ENCODE measurements at regions of chr1 and their contacts with region 1.

Region 1: DNA sequence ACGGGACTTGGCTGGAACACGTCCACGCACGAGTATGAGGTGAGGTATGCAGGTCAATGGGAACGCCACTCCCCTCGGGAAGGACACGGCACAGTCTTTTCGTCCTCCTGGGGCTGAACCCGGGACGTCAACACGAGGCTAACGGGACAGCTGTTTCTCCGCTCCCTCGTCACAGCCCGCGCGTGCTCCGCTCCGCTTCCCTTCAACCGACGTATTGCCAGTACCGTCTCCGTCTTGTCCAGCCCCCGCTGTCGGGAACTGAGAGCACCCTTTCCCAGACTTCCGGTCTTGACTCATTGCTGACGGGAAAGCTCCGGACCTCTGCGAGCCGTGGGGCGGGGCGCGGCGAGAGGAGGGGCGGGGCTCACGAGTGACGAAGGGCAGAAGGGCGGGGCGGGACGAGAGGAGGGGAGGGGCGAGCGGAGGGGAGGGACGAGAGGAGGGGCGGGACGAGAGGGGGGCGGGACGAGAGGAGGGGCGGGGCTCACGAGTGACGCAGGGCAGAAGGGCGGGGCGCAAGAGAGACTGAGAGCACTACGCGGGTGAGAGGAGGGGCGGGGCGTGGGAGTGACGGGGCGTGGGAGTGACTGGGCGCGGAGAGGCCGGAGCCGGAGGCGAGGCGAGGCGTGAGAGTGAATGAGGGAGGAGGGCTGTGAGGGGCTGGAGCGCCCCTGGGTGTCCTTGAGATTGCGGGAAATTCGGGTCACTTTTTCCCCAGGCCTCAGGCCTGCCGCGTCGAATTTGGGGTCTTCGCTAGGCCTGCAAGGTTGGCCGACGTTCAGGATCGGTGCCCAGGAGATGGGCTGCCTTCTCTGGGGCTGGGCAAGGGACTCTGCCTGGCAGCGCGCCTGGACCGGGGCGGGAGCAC is 22.2 kb upstream of the CFAP126 start:
- DNase-seq: peak; percentile 96 to 98
- ATAC-seq: peak; percentile 95 to 97
- H3K4me3 ChIP-seq: peak overlapping the region; percentile 61 to 82 (median 76)
- H3K27ac ChIP-seq: peak overlapping the region; percentile 86 to 95 (median 92)
- H3K4me1 ChIP-seq: peaks cover 9 to 11% of the 10 kb centered on the region in 2 donors
- H3K27me3 ChIP-seq: no peaks in the 10 kb centered on the region
- CTCF ChIP-seq: no peak
- POLR2A ChIP-seq: peak; percentile 78 to 89

Region 2: DNA sequence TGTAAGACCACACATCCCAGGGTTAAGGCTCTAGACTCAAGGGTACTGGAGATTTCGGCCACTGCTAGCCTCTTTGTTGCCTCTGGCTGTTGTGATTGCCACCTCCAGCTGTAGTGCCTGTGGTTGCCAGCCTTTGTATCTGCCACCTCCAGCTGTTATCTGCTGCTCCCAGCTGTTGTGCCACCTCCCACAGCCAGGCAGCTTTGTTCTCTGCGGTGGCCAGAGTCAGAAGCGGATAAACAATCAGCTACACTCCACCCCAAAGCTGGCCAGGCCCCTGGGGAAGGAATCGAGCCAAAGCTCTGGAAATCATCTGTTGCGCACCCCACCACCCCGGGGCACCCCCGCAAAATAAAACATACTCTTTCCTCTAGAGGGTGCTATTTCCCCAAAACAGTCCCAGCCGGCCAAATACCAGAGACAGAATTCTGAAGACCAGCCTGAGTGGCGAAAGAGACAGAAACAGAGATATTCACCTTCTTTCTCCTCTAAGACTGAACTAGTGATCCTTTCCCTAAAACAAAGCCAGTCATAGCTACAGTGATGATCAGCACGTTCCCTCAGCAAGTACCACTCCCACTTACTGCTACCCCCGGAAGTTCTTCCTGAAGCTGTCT is 1343.3 kb before region 1 on chr1:
- in situ Hi-C with region 1: no loop called
- intact Hi-C with region 1: no loop called
- DNase-seq: peak in 1 of 2 donors; percentile 31
- ATAC-seq: peak; percentile 67 to 83
- H3K4me3 ChIP-seq: no peak overlapping the region
- H3K27ac ChIP-seq: no peak overlapping the region
- H3K4me1 ChIP-seq: peaks cover 0 to 6% of the 10 kb centered on the region in 2 donors
- H3K27me3 ChIP-seq: no peaks in the 10 kb centered on the region
- CTCF ChIP-seq: peak; percentile 24 to 65 (median 54)
- POLR2A ChIP-seq: no peak

Region 3: GRCh38 chr1:161192476-161193465 is 197.2 kb before region 1 on chr1:
- in situ Hi-C with region 1: loop called in 1 of 4 experiments (anchors 10 kb)
- intact Hi-C with region 1: no loop called
- DNase-seq: peak in 1 of 2 donors; percentile 57
- ATAC-seq: peak; percentile 75 to 82
- H3K4me3 ChIP-seq: no peak overlapping the region
- H3K27ac ChIP-seq: peak overlapping the region in 3 of 4 donors; percentile 54 to 94 (median 58)
- H3K4me1 ChIP-seq: peaks cover 9% of the 10 kb centered on the region in 2 donors
- H3K27me3 ChIP-seq: no peaks in the 10 kb centered on the region
- CTCF ChIP-seq: peak; percentile 71 to 89 (median 75)
- POLR2A ChIP-seq: no peak

Region 4: GRCh38 chr1:161201828-161202725 is 187.8 kb before region 1 on chr1 and contains the start of gene NDUFS2:
- in situ Hi-C with region 1: loop called in 1 of 4 experiments (anchors 10 kb)
- intact Hi-C with region 1: loop called (anchors 5 kb)
- DNase-seq: peak; percentile 99
- ATAC-seq: peak; percentile 97
- H3K4me3 ChIP-seq: peak within 1 kb of the TSS; percentile 66 to 93 (median 84)
- H3K27ac ChIP-seq: peak within 1 kb of the TSS; percentile 94 to 99 (median 98)
- H3K4me1 ChIP-seq: peaks cover 58 to 81% of the 10 kb centered on the region in 2 donors
- H3K27me3 ChIP-seq: no peaks in the 10 kb centered on the region
- CTCF ChIP-seq: peak in 1 of 5 experiments; percentile 18
- POLR2A ChIP-seq: peak; percentile 82 to 86
- total RNA-seq, gene NDUFS2: 206 to 260 (median 226) TPM

Region 5: DNA sequence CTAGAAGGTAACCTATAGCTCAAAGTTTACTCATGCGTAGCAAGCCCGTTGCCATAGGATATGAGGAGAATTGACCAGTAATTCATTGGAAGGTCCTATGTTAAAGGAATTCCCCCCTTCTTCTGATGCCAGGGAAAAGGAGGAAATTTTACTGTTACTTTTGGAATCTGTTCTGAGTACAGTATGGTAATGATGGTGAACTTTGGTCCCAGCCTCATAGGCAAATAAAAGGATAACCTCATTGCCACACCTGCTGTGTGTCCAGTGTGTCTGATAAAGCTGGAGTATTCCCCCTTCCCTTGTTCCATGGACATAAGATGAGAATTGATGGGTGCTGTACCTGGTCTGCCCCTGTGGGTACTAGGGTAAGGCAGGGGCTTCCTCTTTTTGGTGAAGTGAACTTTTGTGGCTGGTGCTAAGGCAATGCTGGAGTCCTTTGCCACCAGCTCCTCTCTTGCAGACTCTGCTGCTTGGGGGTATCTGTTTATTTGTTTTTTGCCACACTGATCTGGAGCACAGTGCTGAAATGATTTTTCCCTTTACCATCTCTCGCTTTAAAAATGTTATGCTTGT is 102.4 kb before region 1 on chr1:
- in situ Hi-C with region 1: no loop called
- intact Hi-C with region 1: no loop called
- DNase-seq: no peak
- ATAC-seq: no peak
- H3K4me3 ChIP-seq: no peak overlapping the region
- H3K27ac ChIP-seq: no peak overlapping the region
- H3K4me1 ChIP-seq: no peaks in the 10 kb centered on the region
- H3K27me3 ChIP-seq: no peaks in the 10 kb centered on the region
- CTCF ChIP-seq: no peak
- POLR2A ChIP-seq: no peak

Region 6: DNA sequence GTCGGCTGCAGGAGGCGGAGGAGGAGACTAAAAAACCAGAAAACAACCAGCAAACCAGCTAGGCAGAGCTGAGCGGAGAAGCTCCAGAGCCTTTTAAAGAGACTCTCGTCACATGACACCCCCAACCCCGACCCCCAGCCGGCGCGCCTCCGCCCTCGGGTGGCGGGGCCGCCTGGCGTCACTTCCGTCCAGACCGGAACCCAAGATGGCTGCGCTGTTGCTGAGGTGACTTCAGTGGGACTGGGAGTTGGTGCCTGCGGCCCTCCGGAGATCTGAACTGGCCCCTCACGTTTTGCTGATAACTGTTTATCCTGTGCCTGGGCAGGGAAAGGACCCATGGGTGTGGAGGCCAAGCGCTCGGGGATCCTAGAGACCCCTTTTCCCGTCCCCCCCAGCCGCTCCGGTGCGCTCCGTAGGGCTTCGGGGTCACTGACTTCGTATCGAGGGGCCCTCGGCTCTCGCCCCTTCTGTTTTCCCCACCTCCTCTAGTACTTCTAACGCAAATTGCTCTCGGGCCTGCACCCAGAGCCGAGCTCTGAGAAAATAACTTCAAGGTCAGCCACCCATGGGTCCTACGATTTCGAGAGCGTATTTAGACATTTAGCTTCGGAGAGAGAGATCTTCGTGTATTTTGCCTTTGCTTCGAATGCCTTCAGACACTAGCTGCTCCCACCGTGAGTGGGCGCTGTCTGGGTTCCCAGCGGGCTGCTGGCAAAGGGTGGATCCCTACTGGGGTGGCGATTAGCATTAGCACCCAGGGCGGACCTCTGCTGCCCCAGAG is 75.5 kb before region 1 on chr1 and contains the start of gene SDHC:
- in situ Hi-C with region 1: loop called in 1 of 4 experiments (anchors 10 kb)
- intact Hi-C with region 1: no loop called
- DNase-seq: peak; percentile 77 to 87
- ATAC-seq: peak; percentile 96 to 97
- H3K4me3 ChIP-seq: peak within 1 kb of the TSS; percentile 75 to 99 (median 93)
- H3K27ac ChIP-seq: peak within 1 kb of the TSS; percentile 95 to 99 (median 96)
- H3K4me1 ChIP-seq: peaks cover 19 to 20% of the 10 kb centered on the region in 2 donors
- H3K27me3 ChIP-seq: no peaks in the 10 kb centered on the region
- CTCF ChIP-seq: peak in 3 of 5 experiments; percentile 14 to 31 (median 22)
- POLR2A ChIP-seq: peak; percentile 82 to 83
- total RNA-seq, gene SDHC: 47.5 to 112 (median 63.8) TPM